Head of caudate nucleus (tissue), 42 donors: ENCODE measurements at regions of chrX and their contacts with region 1.

Region 1: DNA sequence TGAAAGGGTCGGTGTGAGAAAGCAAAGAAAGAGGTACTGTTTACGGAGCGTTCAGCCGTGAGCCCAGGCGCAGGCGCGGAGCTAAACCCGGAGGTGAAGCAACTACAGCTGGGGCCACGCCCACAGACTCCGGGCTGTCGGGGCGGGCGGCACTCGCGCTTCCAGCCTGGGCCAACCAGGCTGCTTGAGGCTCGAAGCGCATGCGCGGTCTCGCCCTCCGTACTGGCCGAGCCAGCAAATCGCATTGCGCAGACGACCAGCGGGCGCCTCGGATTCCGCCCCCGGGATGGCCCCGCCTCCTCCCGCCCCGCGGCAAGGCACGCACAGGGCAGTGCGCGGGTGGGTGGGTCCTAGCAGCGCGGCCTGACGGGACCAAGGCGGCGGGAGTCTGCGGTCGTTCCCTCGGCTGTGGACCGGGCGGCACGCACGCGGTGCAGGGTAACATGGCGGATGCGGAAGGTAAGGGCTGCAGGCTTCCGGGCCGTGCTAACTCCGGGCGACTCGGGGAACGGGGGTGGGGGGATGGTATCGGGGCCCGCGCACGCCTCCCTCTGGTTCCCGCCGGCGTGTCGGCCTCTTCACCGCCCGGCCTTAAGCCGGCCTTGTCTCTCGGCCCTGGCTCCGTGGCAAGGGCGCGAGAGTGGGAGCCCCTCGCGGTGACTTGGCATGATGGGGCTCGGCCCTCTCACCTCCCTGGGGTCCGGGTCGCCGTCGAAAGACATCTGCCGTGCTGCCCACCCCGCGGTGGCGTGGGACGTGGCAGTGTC is at the start of gene DKC1:
- DNase-seq: peak; percentile 84 to 97 (median 94)

Region 2: DNA sequence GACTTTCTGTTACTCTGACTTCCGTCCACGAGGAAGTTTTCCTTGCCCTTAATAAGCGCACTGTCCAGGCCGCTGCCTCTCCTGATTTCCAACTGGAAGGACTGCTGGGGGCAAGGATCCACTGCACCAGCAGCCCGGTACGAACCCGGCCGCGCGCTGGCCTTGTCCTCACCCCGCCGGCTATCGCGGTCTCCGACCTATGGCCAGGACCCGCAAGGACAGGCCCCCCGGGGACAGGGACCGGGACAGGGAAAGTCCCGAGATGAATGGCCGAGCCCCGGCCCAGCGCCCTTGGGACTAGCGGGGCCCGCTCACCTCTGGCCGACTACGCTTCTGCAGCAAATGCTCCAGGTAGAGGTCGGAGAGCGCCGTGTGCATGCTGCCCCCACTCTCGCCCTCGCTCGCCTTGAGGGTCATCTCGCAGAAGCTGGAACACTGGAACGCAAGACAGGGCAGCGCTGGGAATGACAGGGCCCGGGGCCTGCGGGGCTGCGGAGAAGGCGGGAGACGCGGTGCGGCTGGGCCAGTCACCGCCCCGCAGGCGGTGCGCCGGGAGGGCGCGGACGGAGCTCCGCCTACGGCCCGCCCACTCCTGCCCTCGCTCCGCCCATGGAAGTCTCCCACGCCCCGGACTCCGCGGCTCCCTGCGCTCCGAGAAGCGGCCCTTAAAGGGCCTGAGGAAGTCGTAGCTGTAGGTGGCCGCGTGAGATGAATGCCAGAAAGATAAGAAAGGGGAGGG is 42.4 kb after region 1 on chrX and contains the start of gene MPP1:
- intact Hi-C with region 1: loop called (anchors 2 kb)
- DNase-seq: peak; percentile 28 to 88 (median 76)